Ovary (tissue), 10 donors: ENCODE measurements at regions of chr13 and their contacts with region 1.

Region 1: GRCh38 chr13:72244788-72245187 is 377.8 kb upstream of the DACH1 start:
- DNase-seq: no peak
- H3K4me3 ChIP-seq: no peak overlapping the region
- H3K27ac ChIP-seq: no peak overlapping the region
- H3K4me1 ChIP-seq: no peaks in the 10 kb centered on the region
- H3K27me3 ChIP-seq: no peaks in the 10 kb centered on the region
- CTCF ChIP-seq: no peak
- EP300 ChIP-seq: no peak
- POLR2A ChIP-seq: no peak

Region 2: DNA sequence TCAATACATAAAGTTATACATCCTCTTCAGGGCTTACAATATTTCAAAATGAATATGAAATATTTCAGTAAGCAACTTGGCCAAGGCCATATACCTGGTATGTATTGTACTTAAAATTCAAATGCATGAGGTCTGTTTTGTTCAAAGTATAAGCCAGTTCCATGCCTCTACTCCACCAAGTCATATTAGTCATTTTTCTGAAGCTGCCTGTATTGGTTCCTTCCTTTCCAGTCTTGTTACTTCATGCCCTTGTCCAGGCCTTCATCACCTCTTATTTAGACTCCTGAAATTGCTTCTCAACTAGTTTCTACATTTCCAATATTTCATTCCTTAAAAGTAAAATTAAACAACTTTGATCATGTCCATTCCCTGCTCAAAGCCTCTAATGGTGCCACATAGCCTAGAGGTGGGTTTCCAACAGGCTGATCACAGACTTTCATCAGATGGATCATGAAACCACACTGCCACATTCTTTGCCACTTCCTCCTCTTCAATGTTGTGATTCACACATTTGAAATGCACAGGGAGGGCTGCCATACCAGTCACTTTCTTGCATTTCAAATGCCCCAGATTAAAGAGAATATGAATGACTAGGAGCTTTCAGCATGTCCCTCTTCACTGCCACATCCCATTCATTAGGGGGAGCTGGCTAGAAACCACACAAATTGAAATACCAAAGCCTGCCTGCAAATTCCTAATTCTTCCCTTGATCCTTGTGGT is 46.3 kb after region 1 on chr13:
- intact Hi-C with region 1: loop called in 1 of 4 experiments (anchors 2 kb)
- DNase-seq: no peak
- H3K4me3 ChIP-seq: no peak overlapping the region
- H3K27ac ChIP-seq: no peak overlapping the region
- H3K4me1 ChIP-seq: peaks cover 6% of the 10 kb centered on the region
- H3K27me3 ChIP-seq: no peaks in the 10 kb centered on the region
- CTCF ChIP-seq: no peak
- EP300 ChIP-seq: no peak
- POLR2A ChIP-seq: no peak

Region 3: DNA sequence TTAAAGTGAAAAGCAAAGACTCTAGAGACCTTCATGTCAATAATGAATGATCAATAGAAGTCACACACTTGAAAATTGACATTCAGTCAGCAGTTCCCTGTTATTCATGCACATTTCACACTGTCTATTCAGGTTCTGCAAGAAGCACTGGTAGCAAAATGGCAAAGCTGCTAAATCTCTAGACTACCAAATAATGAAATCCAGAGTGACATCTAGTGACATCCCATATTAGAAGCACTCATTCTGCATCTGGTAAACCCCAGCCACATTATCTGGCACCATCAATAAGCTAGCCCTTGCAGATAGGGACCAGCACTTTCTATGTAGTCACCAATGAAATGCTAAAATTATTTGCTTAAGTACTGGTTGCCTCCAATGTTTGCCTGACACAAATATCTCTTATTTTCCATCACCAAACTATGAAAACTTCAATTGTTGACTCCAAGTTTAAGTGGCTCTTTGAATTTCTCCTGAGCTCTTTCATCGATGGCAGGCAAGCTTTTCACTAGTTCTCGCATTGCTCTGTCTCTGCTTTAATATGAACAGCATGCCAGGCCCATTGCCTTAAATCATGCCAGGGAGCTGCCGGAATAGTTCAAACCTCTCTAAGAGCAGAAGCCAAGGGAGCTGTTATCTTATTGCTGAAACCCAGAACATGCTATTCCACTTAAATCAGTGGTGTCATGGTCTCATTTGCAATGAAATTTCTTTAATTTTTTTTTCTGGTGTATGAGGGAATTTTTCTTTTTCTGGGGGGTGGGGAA is 72.7 kb after region 1 on chr13:
- intact Hi-C with region 1: no loop called
- DNase-seq: peak in 2 of 5 donors; percentile 20 to 40
- H3K4me3 ChIP-seq: no peak overlapping the region
- H3K27ac ChIP-seq: no peak overlapping the region
- H3K4me1 ChIP-seq: no peaks in the 10 kb centered on the region
- H3K27me3 ChIP-seq: no peaks in the 10 kb centered on the region
- CTCF ChIP-seq: no peak
- EP300 ChIP-seq: no peak
- POLR2A ChIP-seq: no peak

Region 4: GRCh38 chr13:72415817-72416216 is 171.0 kb after region 1 on chr13:
- intact Hi-C with region 1: no loop called
- DNase-seq: no peak
- H3K4me3 ChIP-seq: no peak overlapping the region
- H3K27ac ChIP-seq: no peak overlapping the region
- H3K4me1 ChIP-seq: no peaks in the 10 kb centered on the region
- H3K27me3 ChIP-seq: no peaks in the 10 kb centered on the region
- CTCF ChIP-seq: no peak
- EP300 ChIP-seq: no peak
- POLR2A ChIP-seq: no peak

Region 5: GRCh38 chr13:72834601-72835000 is 589.8 kb after region 1 on chr13:
- intact Hi-C with region 1: no loop called
- DNase-seq: no peak
- H3K4me3 ChIP-seq: no peak overlapping the region
- H3K27ac ChIP-seq: no peak overlapping the region
- H3K4me1 ChIP-seq: no peaks in the 10 kb centered on the region
- H3K27me3 ChIP-seq: no peaks in the 10 kb centered on the region
- CTCF ChIP-seq: no peak
- EP300 ChIP-seq: no peak
- POLR2A ChIP-seq: no peak